ENCODE measurements at regions of chr5 and their contacts with region 1.

Region 1: DNA sequence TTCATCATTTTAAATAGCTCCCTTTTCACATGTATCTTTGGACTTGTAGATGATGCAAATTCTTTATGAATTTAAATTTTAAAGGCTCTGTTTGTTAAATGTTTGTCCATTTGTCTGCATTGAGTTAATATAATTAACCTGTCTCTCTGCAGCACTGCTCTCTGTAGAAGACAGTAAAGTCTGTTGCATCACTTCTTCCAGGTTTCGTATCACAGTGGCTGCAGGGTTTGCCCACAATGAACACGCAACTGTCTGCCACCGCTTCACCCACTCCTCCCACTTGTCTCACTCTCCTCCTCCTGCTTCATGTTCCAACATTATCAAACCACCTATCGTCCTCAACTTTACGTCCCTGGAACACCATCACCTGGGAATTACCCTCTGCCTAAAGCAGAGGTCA is 231.3 kb upstream of the SLC30A5 start:
- DNase-seq: no peak
- ATAC-seq: no peak
- H3K4me3 Mint-ChIP-seq: no peak overlapping the region
- H3K27ac Mint-ChIP-seq: no peak overlapping the region
- H3K4me1 Mint-ChIP-seq: no peaks in the 10 kb centered on the region
- H3K27me3 Mint-ChIP-seq: peaks cover 22% of the 10 kb centered on the region
- CTCF ChIP-seq: no peak

Region 2: DNA sequence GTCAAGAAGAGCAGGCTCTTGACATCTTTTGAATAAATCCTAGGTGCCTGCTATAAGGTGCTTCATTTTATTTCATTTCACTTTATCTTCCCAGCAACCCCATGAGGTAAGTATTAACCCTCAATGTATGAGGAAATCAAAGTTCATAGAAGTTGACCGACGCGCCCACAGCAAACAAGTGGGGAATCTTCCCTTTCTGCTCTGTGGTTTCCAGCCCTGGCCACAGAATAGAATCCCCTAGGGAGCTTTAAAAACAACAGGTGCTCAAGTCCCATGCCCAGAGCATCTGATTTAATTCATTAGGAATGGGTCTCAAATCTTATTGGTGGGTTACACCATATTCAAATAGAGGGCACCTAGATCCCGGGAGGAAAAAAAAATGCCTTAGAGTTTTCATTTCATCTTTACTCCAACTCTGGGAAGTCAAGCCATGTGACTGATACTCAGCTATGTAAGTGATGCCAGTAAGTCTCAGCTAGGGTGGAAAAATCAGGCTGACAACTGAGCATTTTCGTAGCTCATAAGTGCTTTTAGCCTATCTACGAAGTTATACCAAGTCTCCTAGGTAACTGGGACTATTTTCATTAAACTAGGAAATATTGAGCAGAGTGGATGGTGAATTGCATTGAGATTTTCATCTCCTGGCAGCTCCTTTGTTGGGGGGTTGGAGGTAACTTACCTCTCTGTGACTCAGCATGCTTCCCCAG is 122.2 kb before region 1 on chr5:
- CTCF ChIA-PET with region 1: no interaction called
- POLR2A ChIA-PET with region 1: no interaction called
- intact Hi-C with region 1: loop called (anchors 1 kb)
- DNase-seq: no peak
- ATAC-seq: peak; percentile 69
- H3K4me3 Mint-ChIP-seq: peak overlapping the region; percentile 15
- H3K27ac Mint-ChIP-seq: no peak overlapping the region
- H3K4me1 Mint-ChIP-seq: peaks cover 40% of the 10 kb centered on the region
- H3K27me3 Mint-ChIP-seq: peaks cover 9% of the 10 kb centered on the region
- CTCF ChIP-seq: no peak

Measured in activated B cell treated with CpG ODN at 0.5 μM for 24 hours (primary cell).